Activated naive CD4-positive, alpha-beta T cell treated with anti-CD3 and anti-CD28 coated beads for 36 hours (primary cell): ENCODE measurements at regions of chr19 and their contacts with region 1.

Region 1: GRCh38 chr19:44770550-44771257 is 7.0 kb upstream of the CBLC start:
- DNase-seq: peak; percentile 99
- H3K4me3 Mint-ChIP-seq: peak overlapping the region; percentile 65
- H3K27ac Mint-ChIP-seq: peak overlapping the region; percentile 86
- H3K4me1 Mint-ChIP-seq: peaks cover 29% of the 10 kb centered on the region
- H3K27me3 Mint-ChIP-seq: no peaks in the 10 kb centered on the region

Region 2: DNA sequence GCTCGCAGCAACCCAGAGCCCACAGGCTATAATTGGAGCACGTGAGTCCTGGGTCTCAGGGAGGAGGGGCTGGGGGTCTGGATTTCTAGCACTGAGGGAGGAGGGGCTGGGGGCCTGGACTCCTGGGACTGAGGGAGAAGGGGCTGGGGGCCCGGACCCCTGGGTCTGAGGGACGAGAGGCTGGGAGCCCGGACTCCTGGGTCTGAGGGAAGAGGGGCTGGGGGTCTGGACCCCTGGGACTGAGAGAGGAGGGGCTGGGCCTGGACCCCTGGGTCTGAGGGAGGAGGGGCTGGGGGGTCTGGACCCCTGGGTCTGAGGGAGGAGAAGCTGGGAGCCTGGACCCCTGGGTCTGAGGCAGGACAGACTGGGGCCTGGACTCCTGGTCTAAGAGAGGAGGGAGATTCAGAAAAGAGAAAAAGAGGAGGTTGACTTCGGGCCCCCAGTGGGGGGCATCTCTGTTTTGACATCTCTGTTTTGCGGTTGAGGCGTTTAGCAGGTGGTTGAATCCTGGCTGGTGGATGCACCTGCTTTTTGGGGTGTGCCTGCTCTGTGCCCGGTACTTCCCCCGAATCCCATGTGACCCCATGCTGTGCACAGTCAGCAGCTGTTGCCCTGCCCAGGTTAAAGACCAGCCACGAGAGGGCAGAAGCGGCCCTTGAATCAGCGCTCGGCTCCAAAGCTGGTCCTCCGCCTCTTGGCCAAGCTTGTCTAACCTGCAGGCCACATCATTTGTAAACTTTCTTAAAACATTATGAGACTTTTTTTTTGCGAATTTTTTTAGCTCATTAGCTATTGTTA is 116.5 kb before region 1 on chr19:
- CTCF ChIA-PET with region 1: interaction called, 14 read pairs
- intact Hi-C with region 1: loop called (anchors 1 kb)
- DNase-seq: peak; percentile 91
- H3K4me3 Mint-ChIP-seq: no peak overlapping the region
- H3K27ac Mint-ChIP-seq: no peak overlapping the region
- H3K4me1 Mint-ChIP-seq: peaks cover 7% of the 10 kb centered on the region
- H3K27me3 Mint-ChIP-seq: peaks cover 2% of the 10 kb centered on the region

Region 3: DNA sequence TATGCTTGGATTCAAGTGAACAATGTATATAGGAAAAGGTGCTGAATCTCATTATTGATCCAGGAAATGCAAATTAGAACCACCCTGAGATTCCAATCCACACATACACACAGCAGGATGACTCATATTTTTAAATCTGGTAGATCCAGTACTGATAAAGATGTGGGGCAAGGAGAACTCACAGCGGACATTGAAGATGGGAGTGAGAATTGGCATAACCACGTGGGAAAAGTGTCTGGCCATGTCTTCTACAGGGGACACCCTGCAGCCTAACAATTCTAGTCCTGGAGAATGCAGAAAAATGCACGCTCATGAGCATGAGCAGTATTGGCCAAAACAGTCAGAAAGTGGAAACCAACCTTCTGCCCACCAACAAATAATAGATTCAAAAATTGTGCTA is 35.7 kb before region 1 on chr19:
- CTCF ChIA-PET with region 1: interaction called, 394 read pairs
- intact Hi-C with region 1: no loop called
- DNase-seq: no peak
- H3K4me3 Mint-ChIP-seq: no peak overlapping the region
- H3K27ac Mint-ChIP-seq: no peak overlapping the region
- H3K4me1 Mint-ChIP-seq: no peaks in the 10 kb centered on the region
- H3K27me3 Mint-ChIP-seq: no peaks in the 10 kb centered on the region

Region 4: DNA sequence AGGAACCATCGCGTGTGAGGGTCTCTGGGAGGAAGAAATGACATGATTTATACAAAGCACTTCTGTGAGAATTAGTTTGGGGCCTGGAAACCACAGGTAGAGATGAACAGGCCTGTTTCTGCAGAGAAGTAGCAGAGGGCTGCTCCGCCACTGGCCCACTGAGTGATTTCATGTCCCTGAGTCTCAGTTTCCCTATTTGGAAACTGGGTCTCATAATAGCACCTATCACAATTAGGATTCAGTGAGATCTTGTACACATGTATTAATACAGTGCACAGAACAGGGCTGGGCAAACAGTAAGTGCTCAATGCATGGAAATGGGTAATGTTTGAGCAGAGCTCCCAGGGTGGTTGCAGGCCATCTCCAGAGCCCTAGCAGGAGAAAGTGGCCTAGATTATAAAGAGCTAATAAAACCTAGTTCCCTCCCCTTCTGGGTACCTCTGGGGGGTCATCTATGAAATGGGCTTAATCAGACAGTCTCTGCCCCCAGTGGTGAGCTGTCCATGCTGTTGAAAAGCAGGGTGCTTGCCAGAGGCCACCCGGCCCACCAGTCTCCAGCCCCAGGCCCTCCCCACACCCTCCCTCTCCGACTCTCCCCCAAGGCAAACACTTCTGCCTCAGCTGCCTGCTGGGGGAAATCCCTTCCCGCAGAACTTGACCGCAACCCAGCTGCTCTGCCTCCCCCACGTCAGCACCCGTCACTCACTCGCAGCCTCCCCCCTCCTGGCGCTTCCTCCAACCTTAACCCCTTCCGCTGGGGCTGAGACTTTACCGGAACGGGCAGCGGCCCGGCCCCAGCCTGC is 17.7 kb before region 1 on chr19:
- CTCF ChIA-PET with region 1: interaction called, 11 read pairs
- intact Hi-C with region 1: loop called (anchors 1 kb)
- DNase-seq: peak; percentile 98
- H3K4me3 Mint-ChIP-seq: peak overlapping the region; percentile 93
- H3K27ac Mint-ChIP-seq: peak overlapping the region; percentile 97
- H3K4me1 Mint-ChIP-seq: peaks cover 59% of the 10 kb centered on the region
- H3K27me3 Mint-ChIP-seq: no peaks in the 10 kb centered on the region

Region 5: DNA sequence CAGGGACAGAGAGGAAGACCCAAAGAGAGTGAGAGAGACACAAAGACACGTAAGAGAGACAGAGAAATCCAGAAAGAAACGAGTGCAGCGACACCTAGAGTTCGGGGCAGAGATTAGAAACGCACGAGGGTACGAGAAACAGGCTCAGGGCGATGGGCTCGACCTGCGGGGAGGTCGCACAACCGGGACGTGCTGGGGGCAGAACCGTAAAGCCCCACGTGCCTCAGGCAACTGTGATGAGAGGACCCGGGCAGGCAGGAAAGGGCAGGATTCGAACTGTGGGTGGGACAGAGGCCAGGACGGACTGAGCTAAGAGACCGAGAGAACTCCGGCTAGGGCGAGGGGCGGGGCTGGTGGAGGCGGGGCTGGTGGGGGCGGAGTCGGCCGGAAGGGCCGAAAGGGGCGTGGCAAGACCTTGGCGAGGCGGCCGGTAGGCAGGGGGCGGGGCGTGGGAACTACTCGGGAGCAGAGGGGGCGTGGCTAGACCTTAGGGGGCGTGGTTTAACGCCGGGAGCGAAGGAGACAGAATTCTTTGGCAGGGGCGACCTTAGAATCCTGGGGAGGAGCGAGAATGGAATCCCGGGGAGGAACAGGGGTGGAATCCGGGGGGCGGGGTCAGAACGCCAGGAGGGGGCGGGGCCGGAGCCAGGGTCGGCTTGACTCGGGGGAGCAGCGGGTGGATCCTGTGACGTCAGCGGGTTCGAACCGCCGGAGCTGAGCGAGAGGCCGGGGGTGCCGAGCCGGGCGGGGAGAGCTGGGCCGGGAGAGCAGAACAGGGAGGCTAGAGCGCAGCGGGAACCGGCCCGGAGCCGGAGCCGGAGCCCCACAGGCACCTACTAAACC is 75.1 kb after region 1 on chr19 and contains the start of gene NECTIN2:
- CTCF ChIA-PET with region 1: interaction called, 4 read pairs
- intact Hi-C with region 1: loop called (anchors 1 kb)
- DNase-seq: peak; percentile 95
- H3K4me3 Mint-ChIP-seq: peak within 1 kb of the TSS; percentile 83
- H3K27ac Mint-ChIP-seq: no peak within 1 kb of the TSS
- H3K4me1 Mint-ChIP-seq: peaks cover 20% of the 10 kb centered on the region
- H3K27me3 Mint-ChIP-seq: peaks cover 18% of the 10 kb centered on the region
- total RNA-seq, gene NECTIN2: 0.88 to 1.1 TPM

Region 6: DNA sequence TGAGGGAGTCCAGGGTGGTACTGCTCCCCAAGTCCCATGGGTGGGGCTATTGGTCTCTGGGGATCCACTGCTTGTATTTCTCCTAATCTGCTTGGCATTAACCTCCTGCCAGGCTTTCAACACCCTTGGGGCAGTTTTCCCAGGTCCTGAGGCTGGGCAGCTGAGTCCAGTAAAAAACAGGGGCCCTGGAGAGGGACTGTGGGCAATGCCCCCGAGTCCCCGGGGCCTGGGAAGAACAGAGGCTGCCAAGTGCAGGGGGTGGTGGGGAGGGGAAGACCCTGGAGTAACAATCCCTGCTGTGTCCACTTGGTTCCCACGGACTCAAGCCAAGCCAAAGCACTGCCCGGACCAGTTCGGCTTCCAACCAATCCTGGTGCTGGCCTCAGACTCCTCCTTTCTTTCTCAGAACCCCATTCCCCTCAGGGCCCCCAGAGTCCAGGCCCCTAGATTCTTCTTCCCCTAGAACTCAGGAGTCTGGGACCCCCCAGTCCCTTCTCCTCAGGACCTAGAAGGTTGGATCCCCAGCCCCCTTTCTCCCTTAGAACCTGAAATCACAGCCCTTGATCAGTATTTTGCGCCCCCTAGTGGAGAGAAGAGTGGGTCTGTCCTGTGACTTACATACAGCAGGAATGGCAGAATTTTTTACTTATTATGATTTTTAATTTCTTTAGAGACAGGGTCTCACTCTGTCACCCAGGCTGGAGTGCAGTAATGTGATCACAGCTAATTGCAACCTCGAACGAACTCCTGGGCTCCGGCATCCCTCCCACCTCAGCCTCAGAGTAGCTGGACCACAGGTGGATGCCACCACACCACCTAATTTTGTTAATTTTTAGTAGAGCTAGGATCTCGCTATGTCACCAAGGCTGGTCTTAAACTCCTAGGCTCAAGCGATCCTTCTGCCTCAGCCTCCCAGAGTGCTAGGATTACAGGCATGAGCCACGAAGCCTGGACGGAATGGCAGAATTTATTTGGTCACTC is 180.8 kb after region 1 on chr19:
- CTCF ChIA-PET with region 1: no interaction called
- intact Hi-C with region 1: no loop called
- DNase-seq: peak; percentile 72
- H3K4me3 Mint-ChIP-seq: no peak overlapping the region
- H3K27ac Mint-ChIP-seq: no peak overlapping the region
- H3K4me1 Mint-ChIP-seq: peaks cover 20% of the 10 kb centered on the region
- H3K27me3 Mint-ChIP-seq: no peaks in the 10 kb centered on the region

Region 7: DNA sequence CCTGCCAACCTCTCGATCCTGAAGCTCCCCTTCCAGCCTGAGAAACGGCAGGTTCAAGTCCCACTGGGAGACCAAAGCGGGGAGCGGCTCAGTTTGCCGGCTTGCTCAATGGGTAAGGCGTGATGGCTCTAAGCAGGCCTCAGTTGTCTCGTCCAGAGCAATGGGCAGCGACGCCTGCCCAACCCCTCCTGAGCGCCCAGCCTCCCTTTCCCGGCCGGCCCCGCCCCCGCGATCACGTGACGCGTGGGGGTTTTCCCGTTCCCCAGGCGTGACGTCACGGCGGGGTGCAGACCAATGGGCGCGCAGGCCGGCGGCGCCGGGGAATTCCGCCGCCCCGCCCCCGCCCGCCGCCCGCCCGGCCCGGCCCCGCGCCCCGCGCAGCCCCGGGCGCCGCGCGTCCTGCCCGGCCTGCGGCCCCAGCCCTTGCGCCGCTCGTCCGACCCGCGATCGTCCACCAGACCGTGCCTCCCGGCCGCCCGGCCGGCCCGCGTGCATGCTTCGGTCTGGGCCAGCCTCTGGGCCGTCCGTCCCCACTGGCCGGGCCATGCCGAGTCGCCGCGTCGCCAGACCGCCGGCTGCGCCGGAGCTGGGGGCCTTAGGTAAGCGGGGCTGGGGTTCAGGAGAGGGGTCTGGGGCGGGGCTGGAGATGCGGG is 230.5 kb after region 1 on chr19 and contains the start of gene RELB:
- CTCF ChIA-PET with region 1: no interaction called
- intact Hi-C with region 1: no loop called
- DNase-seq: peak; percentile 95
- H3K4me3 Mint-ChIP-seq: peak within 1 kb of the TSS; percentile 95
- H3K27ac Mint-ChIP-seq: peak within 1 kb of the TSS; percentile 98
- H3K4me1 Mint-ChIP-seq: peaks cover 17% of the 10 kb centered on the region
- H3K27me3 Mint-ChIP-seq: no peaks in the 10 kb centered on the region
- total RNA-seq, gene RELB: 55.4 to 57.3 TPM